IMR-90 (cell line): ENCODE measurements at regions of chr4 and their contacts with region 1.

Region 1: GRCh38 chr4:48949518-48950219 is 36.4 kb upstream of the CWH43 start:
- DNase-seq: no peak
- ATAC-seq: no peak
- H3K4me3 ChIP-seq: no peak overlapping the region
- H3K27ac ChIP-seq: no peak overlapping the region
- H3K4me1 ChIP-seq: no peaks in the 10 kb centered on the region
- H3K27me3 ChIP-seq: no peaks in the 10 kb centered on the region; the same call in 1 of the 2 replicates
- CTCF ChIP-seq: no peak
- POLR2A ChIP-seq: no peak
- RAD21 ChIP-seq: no peak

Region 2: GRCh38 chr4:48565362-48566033 is 384.2 kb before region 1 on chr4:
- CTCF ChIA-PET with region 1: no interaction called
- POLR2A ChIA-PET with region 1: no interaction called
- dilution Hi-C with region 1: no loop called
- in situ Hi-C with region 1: loop called (anchors 10 kb)
- intact Hi-C with region 1: no loop called
- DNase-seq: no peak
- ATAC-seq: no peak
- H3K4me3 ChIP-seq: no peak overlapping the region
- H3K27ac ChIP-seq: no peak overlapping the region
- H3K4me1 ChIP-seq: no peaks in the 10 kb centered on the region
- H3K27me3 ChIP-seq: no peaks in the 10 kb centered on the region
- CTCF ChIP-seq: no peak
- POLR2A ChIP-seq: no peak
- RAD21 ChIP-seq: no peak